ENCODE measurements at regions of chr19 and their contacts with region 1.

Region 1: GRCh38 chr19:46661020-46661731 is at the start of gene DACT3:
- DNase-seq: peak; percentile 100

Region 2: DNA sequence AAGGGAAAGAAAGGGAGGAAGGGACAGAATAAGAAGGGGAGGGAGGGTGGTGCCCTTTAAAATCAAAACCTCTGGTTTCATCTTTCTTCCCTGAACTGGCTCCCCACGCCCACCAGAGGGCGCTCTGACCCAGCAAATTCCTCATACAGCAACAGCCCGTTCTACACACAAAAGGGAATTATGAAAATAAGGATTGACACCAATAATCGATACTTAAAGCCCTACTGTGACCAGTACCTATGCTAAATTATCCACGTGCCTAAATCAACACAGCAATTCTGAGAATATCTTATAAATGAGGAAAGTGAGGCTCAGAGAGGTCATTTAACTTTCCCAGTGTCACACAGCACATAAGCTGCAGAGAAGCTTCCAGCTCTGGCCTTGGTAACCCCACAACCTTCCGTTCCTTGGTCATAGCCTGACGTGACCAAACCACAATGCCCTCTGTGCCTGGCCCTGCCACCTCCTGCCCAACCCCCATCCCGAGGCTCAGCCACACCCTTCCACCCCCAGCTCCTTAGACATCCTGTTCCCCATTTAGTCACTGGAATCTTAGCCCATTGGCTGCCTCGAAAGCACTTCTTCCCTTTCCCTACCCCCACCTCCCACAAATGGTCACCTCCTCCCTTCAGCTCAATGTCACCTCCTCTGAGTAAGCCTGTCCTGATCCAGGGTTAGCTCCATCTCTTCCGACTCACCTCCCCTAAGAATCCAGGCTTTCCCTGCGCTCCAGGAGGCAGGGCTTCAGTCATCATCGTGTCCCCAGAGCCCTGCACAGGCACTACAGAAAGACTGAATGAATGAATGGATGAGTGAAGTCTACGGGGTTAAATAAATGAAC is 131.3 kb before region 1 on chr19:
- intact Hi-C with region 1: loop called (anchors 10 kb)
- DNase-seq: peak; percentile 51 to 91 (median 79)

Region 3: DNA sequence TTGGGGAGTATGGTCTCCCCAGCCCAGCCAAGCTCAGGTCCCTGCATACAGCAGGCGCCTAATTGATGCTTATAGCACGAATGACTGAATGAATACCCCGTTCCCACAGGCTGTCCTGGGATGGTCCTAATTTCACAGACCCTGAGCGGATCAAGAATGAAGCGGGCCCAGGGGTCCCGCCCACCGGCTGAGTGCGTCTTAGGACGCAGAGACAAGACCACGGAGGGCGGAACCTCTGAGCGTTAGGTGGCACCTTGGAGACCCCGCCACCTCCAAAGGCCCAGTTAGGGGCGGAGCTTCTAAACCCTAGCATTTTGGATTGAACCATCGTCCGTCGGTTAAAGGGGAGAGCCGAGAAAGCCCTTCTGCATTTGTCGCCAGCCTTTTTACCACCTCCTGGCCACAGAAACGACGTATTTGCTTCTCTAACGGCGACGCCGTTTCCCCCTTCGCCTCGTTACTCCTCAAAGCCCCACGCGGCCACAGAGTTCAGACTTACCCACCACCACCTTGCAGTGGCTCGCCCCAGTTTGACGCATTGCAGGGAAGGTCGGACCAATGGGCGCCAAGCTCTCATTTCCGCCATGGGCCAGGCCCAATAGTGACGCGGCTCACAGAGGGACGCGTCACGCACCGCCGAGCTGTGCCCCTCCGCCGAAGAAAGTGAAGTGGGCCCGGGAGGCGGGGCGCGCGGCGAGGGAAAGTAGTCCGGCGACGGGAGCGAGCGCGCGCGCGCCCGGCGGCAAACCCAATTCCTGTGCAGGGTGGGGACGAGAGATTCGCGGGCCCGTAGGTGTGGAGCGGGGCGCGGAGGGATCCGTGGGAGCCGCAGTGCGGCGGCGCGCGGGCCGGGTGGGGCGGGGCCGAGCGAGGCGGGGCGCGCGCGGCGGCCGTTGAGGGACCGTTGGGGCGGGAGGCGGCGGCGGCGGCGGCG is 60.5 kb before region 1 on chr19:
- intact Hi-C with region 1: loop called (anchors 5 kb)
- DNase-seq: peak; percentile 90 to 99 (median 97)

Region 4: DNA sequence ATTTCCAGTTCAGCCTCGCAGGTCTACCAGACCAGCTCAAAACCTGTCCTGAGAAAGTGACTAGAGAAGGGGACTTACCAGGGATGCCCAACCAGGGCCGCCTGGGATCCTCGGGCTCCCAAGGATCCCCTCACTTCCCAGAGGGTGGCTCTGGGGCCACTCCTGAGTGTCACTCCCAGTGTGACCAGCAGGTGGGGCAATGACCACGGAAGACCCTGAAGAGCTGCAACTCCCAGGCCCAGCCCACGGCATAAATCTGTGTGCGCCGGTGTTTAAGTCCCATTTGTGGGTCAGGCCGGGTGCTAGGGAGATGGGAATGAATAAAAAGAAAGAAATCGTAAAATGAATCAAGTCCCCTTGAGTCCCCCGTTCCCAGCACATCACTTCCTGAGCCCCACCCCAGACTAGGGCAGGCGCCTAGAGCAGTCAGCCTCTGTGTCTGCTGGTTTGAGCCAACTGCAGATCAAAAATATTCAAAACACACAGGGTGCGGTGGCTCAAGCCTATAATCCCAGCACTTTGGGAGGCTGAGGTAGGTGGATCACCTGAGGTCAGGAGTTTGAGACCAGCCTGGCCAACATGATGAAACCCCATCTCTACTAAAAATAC is 47.0 kb before region 1 on chr19:
- intact Hi-C with region 1: loop called (anchors 1 kb)
- DNase-seq: peak; percentile 71 to 97 (median 90)

Region 5: GRCh38 chr19:46710687-46711086 is 49.5 kb after region 1 on chr19:
- intact Hi-C with region 1: no loop called
- DNase-seq: no peak

Region 6: GRCh38 chr19:46721645-46722371 is 60.6 kb after region 1 on chr19:
- intact Hi-C with region 1: no loop called
- DNase-seq: no peak

Measured in head of caudate nucleus (tissue), 42 donors.